GM10248 (cell line): ENCODE measurements at regions of chr1 and their contacts with region 1.

Region 1: GRCh38 chr1:162612606-162613400 is 19.5 kb upstream of the DDR2 start:
- DNase-seq: no peak
- CTCF ChIP-seq: no peak

Region 2: GRCh38 chr1:162587347-162587746 is 25.5 kb before region 1 on chr1:
- CTCF ChIA-PET with region 1: interaction called, 20 read pairs
- POLR2A ChIA-PET with region 1: interaction called, 5 read pairs
- DNase-seq: no peak
- CTCF ChIP-seq: no peak

Region 3: GRCh38 chr1:162627662-162628296 is 15.0 kb after region 1 on chr1:
- CTCF ChIA-PET with region 1: interaction called, 56 read pairs
- POLR2A ChIA-PET with region 1: no interaction called
- DNase-seq: no peak
- CTCF ChIP-seq: peak; percentile 35

Region 4: DNA sequence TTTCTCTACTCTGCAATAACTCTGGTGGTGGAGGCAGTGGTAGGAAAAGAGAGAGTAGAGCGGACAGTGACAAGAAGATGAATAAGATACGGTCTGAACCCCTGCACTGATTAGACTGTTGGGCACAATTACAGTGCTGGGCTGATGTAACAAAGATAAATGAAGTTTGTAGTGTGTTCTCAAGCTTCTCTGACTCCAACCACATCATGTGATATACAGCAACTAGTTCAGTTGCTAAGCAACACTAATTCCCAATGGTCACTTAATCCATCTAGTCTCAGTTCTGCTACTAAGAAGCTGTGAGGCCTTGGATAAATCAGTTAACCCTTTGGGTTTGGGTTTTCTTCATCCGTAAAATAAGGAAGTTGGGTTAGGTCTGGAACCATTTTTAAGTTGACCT is 36.8 kb after region 1 on chr1:
- CTCF ChIA-PET with region 1: interaction called, 10 read pairs
- POLR2A ChIA-PET with region 1: no interaction called
- DNase-seq: no peak
- CTCF ChIP-seq: no peak

Region 5: DNA sequence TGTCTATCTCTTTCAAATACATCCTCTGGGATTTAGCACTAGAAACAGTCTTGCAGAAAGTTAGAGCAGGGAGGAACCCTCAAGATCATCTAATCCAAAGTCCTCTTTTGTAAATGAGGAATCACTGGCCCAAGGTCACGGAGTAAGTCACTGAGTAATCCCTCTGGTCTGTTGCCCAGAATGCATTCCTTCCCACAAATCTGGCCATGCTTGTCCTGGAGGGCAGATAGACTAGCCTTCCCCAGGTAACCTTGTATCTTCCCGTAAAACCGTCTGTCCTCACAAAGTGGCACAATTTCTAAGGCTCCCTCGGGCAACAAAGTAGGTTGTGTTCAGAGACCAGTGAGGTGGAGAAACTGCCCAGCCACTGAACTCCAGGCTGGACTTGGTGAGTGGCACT is 65.6 kb after region 1 on chr1:
- CTCF ChIA-PET with region 1: interaction called, 11 read pairs
- POLR2A ChIA-PET with region 1: interaction called, 4 read pairs
- DNase-seq: no peak
- CTCF ChIP-seq: no peak